ENCODE measurements at regions of chr6 and their contacts with region 1.

Region 1: DNA sequence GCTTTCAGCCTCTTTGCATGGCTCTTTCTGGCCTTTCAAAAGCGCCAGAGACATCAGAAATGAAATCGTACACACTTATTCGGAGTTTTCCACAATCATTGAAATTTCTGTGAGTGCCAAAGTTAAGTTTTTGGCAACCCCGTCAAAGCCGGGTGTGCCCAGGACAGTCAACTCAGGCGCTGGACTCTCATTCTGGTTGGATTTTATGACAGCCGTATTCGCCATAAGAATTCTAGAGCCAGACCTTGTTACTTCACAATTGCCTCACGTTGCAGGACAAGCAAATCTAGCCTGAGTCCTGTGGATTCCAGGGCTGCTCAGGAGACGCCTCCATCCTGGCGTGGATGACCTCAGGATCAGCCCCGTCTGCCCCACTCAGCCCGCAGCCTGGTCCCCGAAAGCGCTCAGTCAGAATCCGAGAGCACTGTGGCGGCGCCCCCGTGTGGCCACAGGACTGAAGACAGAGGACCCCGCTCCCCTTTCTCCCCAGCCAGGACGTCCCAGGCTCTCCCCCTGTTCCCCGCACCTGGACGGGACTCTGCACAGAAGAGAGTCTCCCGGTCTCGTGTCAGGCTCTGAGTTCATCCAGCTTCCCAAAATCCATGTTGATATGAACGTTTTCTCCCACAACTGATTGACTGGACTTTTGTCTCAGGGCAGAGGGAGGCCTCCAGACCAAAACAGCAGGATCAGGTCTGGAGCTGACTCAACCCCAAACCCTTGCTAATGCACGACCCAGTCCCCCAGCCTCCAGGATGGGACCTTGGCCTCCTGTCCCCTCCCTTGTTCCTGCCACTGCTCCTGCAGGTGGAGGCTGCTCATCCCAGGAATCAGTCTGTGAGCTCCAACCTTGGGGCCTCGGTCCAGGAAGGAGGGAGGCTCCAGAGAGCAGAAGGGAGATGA is 38.2 kb downstream of the MICA start:
- DNase-seq: peak; percentile 40 to 70
- ATAC-seq: peak; percentile 82 to 95
- H3K4me3 ChIP-seq: peak overlapping the region in 2 of 4 donors; percentile 40 to 45
- H3K27ac ChIP-seq: no peak overlapping the region
- H3K4me1 ChIP-seq: peaks cover 0 to 4% of the 10 kb centered on the region in 2 donors
- H3K27me3 ChIP-seq: peaks cover 0 to 3% (median 0%) of the 10 kb centered on the region in 3 donors
- CTCF ChIP-seq: peak; percentile 80 to 85 (median 83)
- POLR2A ChIP-seq: no peak

Region 2: DNA sequence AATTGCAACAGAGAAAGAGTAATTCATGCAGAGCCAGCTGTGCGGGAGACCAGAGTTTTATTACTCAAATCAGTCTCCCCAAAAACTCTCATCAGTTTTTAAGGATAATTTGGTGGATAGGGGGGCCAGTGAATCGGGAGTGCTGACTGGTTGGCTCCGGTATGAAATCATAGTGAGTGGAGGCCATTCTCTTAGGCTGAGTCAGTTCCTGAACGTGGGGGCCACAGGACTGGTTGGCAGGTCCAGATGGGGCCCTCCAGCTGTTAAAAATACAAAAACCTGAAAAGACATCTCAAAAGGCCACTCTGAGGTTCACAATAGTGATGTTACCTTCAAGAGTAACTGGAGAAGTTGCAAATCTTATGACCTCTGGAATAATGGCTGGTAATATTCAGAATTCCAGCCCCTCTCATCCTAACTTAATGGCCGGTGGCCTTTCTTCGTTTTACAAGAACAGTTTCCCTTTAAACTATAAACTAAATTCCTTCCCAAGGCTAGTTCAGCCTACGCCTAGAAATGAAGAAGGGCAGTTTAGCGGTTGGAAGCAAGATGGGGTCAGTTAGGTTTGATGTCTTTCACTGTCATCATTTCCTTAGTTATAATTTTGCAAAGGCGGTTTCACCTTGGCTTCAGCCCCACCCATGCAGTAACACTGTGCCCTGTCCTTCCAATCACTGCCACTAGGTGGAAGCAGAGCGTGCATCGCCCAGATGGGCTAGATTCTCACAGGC is 45.0 kb before region 1 on chr6:
- in situ Hi-C with region 1: loop called (anchors 5 kb)
- intact Hi-C with region 1: loop called (anchors 1 kb)
- DNase-seq: peak; percentile 47 to 75
- ATAC-seq: peak; percentile 39 to 49
- H3K4me3 ChIP-seq: no peak overlapping the region
- H3K27ac ChIP-seq: no peak overlapping the region
- H3K4me1 ChIP-seq: peaks cover 0 to 5% of the 10 kb centered on the region in 2 donors
- H3K27me3 ChIP-seq: no peaks in the 10 kb centered on the region
- CTCF ChIP-seq: peak; percentile 60 to 98 (median 85)
- POLR2A ChIP-seq: no peak

Region 3: GRCh38 chr6:31403283-31403989 is 38.2 kb before region 1 on chr6 and contains the start of gene MICA:
- in situ Hi-C with region 1: loop called (anchors 5 kb)
- intact Hi-C with region 1: no loop called
- DNase-seq: peak; percentile 75 to 86
- ATAC-seq: peak; percentile 59 to 64
- H3K4me3 ChIP-seq: peak within 1 kb of the TSS; percentile 66 to 81 (median 76)
- H3K27ac ChIP-seq: peak within 1 kb of the TSS; percentile 93 to 98 (median 96)
- H3K4me1 ChIP-seq: peaks cover 29 to 34% of the 10 kb centered on the region in 2 donors
- H3K27me3 ChIP-seq: no peaks in the 10 kb centered on the region
- CTCF ChIP-seq: peak in 3 of 5 experiments; percentile 25 to 39 (median 27)
- POLR2A ChIP-seq: peak; percentile 85 to 89
- total RNA-seq, gene MICA: 0.17 to 7.8 (median 5.0) TPM

Measured in gastrocnemius medialis (tissue), 4 donors.